CD4-positive, alpha-beta memory T cell (primary cell): ENCODE measurements at regions of chr4 and their contacts with region 1.

Region 1: DNA sequence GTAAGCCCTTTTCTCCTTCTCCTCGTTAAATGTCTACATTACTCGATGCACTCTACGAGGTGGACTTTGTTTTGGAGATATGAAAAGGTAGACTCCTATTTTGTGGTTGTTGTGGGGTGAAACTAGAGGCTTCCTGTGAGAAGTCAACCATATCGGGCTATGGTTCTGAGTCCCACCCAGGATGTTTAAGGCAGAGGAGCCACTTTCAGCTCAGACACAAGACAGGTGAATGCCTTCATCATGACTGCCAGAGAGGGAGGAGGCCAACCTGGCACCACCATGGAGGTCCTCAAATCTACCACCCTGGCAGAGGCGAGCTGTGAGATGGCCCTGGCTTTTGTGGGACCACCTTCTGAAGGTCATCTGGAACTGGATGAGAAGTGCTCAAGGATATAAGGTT is 154.4 kb upstream of the KLF3 start:
- DNase-seq: peak; percentile 67 to 77 (median 73)
- H3K4me3 ChIP-seq: peak overlapping the region; percentile 43 to 87
- H3K4me3 Mint-ChIP-seq: peak overlapping the region; percentile 77 to 91 (median 84)
- H3K27ac ChIP-seq: peak overlapping the region; percentile 63
- H3K27ac Mint-ChIP-seq: peak overlapping the region; percentile 77 to 96 (median 88)
- H3K4me1 ChIP-seq: peaks cover 89% of the 10 kb centered on the region
- H3K4me1 Mint-ChIP-seq: peaks cover 69 to 92% (median 79%) of the 10 kb centered on the region in 4 donors
- H3K27me3 ChIP-seq: no peaks in the 10 kb centered on the region
- H3K27me3 Mint-ChIP-seq: no peaks in the 10 kb centered on the region

Region 2: GRCh38 chr4:38190717-38191178 is 318.8 kb before region 1 on chr4:
- CTCF ChIA-PET with region 1: no interaction called
- POLR2A ChIA-PET with region 1: no interaction called
- intact Hi-C with region 1: no loop called
- DNase-seq: no peak
- H3K4me3 ChIP-seq: no peak overlapping the region
- H3K4me3 Mint-ChIP-seq: no peak overlapping the region
- H3K27ac ChIP-seq: no peak overlapping the region
- H3K27ac Mint-ChIP-seq: no peak overlapping the region
- H3K4me1 ChIP-seq: no peaks in the 10 kb centered on the region
- H3K4me1 Mint-ChIP-seq: no peaks in the 10 kb centered on the region
- H3K27me3 ChIP-seq: no peaks in the 10 kb centered on the region
- H3K27me3 Mint-ChIP-seq: peaks cover 1 to 3% of the 10 kb centered on the region in 2 donors

Region 3: DNA sequence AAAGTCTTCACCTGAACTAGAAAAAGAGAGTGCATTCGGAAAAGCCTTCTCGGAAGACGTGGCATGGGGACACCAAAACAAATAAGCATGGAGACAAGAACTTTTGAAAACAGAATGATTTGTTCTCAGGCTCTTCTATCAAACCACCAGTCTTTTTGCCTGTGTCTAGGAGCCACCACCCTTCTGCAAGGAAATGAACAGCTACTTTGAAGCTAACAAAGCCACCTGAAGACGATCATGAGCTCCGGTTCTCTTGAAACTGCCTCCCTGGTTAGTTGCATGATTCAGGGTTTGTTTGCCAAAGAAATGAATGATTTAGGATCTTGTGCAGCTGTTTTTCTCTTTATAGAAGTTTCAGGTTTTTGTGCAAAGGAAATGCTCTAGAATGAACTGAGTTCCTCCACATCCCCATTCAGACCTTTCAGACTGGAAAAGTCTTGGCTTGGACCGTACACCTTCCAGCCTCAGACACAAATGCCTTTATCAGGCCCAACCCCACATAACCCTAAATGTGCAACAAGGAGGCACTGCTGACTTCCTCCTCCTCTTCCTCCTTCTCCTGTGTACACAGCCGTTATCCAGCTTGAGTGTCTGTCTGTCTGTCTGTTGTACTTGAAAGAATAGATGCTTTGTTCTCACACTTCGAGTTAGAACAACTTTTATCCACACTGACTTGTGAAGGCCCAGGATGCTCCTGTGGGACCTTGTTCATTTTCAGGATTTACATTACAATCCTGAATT is 180.4 kb before region 1 on chr4:
- CTCF ChIA-PET with region 1: no interaction called
- POLR2A ChIA-PET with region 1: interaction called, 6 read pairs
- intact Hi-C with region 1: loop called (anchors 5 kb)
- DNase-seq: peak in 4 of 5 donors; percentile 32 to 44 (median 39)
- H3K4me3 ChIP-seq: no peak overlapping the region
- H3K4me3 Mint-ChIP-seq: peak overlapping the region; percentile 4 to 66 (median 32)
- H3K27ac ChIP-seq: no peak overlapping the region
- H3K27ac Mint-ChIP-seq: peak overlapping the region; percentile 28 to 90 (median 81)
- H3K4me1 ChIP-seq: peaks cover 52% of the 10 kb centered on the region
- H3K4me1 Mint-ChIP-seq: peaks cover 32 to 59% (median 47%) of the 10 kb centered on the region in 4 donors
- H3K27me3 ChIP-seq: no peaks in the 10 kb centered on the region
- H3K27me3 Mint-ChIP-seq: no peaks in the 10 kb centered on the region

Region 4: DNA sequence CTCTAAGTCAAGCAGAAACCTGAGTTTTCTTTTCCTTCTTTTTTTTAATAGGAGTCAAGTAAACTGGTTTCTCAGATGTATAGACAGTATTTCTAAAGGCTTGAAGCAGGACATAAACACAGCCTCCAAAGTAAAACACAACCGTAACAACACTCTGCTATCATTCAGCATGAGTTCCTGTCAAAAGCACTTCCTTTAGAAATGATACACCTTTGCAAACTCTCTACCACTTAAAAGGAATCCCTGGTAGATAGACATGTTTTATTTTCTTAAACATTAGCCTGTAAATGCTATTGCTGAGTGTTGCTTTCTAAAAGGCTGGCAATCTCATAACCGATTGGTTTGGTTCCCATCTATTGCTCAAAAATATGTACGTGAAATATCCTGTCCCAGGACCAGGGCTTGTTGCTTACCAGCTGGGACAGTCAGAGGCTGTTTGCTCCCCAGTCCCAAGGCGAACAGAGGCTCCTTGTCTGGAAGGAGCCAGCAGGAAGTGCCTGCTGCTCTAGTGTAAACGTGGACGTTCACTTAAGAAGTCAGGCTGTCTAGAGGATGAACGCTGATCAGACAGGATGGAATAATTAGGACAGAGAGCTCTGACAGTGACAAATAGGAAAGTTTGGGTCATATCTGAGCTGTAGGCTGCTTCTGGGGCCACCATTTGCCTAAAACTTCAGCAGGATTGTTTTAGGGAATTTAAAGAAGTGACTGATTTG is 19.5 kb before region 1 on chr4:
- CTCF ChIA-PET with region 1: interaction called, 3 read pairs
- POLR2A ChIA-PET with region 1: interaction called, 48 read pairs
- intact Hi-C with region 1: loop called (anchors 2 kb)
- DNase-seq: peak in 4 of 5 donors; percentile 22 to 40 (median 34)
- H3K4me3 ChIP-seq: peak overlapping the region in 1 of 2 donors; percentile 24
- H3K4me3 Mint-ChIP-seq: peak overlapping the region; percentile 51 to 86 (median 76)
- H3K27ac ChIP-seq: peak overlapping the region; percentile 19
- H3K27ac Mint-ChIP-seq: peak overlapping the region; percentile 86 to 94 (median 93)
- H3K4me1 ChIP-seq: peaks cover 44% of the 10 kb centered on the region
- H3K4me1 Mint-ChIP-seq: peaks cover 30 to 45% (median 34%) of the 10 kb centered on the region in 4 donors
- H3K27me3 ChIP-seq: no peaks in the 10 kb centered on the region
- H3K27me3 Mint-ChIP-seq: no peaks in the 10 kb centered on the region

Region 5: DNA sequence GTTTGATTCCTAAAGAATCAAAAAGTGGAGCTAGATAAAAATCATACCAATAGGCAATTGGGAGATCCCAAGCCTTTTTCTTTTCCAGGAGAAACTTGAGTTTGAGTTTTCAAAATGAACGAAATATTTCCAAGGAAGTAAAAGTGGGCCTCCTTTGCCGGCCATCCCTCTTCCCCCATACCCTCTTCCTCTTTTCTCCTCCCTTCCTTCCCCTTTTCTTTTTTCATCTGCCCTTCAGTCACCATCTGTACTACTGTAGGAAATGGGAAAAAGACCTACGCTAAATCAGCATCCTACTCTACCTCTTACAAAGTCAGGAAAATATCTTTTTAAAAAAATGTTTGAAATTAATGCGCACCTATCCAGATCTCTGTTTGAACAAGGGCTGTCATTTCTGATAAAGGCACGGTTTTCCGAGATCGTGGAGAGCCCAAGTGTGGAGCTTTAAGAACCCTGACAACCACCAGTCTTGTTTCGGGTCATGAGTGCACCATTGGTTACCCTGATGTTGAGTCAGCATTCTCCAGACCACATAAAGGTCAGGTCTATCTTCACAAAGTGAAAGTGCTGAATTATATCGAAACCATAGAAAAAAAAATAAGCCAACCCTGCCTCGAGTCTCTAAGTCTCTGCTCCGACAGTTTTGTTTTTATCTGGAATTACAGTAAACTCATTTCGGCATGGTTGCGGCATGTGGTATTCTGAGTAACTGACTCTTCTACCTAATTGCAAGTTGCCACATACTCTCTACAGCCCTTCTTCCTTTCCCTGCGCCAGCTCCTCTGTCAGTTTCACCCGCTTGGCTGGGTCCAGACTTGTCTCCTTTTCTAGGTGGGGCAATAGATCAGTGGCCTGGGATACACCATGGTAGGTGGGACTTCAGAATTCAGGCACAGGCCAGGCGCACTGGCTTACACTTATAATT is 14.2 kb after region 1 on chr4:
- CTCF ChIA-PET with region 1: interaction called, 8 read pairs
- POLR2A ChIA-PET with region 1: interaction called, 32 read pairs
- intact Hi-C with region 1: loop called (anchors 2 kb)
- DNase-seq: peak; percentile 52 to 73 (median 63)
- H3K4me3 ChIP-seq: peak overlapping the region; percentile 3 to 18
- H3K4me3 Mint-ChIP-seq: peak overlapping the region; percentile 80 to 92 (median 88)
- H3K27ac ChIP-seq: peak overlapping the region; percentile 6
- H3K27ac Mint-ChIP-seq: peak overlapping the region; percentile 77 to 93 (median 88)
- H3K4me1 ChIP-seq: peaks cover 30% of the 10 kb centered on the region
- H3K4me1 Mint-ChIP-seq: peaks cover 23 to 53% (median 39%) of the 10 kb centered on the region in 4 donors
- H3K27me3 ChIP-seq: no peaks in the 10 kb centered on the region
- H3K27me3 Mint-ChIP-seq: no peaks in the 10 kb centered on the region

Region 6: DNA sequence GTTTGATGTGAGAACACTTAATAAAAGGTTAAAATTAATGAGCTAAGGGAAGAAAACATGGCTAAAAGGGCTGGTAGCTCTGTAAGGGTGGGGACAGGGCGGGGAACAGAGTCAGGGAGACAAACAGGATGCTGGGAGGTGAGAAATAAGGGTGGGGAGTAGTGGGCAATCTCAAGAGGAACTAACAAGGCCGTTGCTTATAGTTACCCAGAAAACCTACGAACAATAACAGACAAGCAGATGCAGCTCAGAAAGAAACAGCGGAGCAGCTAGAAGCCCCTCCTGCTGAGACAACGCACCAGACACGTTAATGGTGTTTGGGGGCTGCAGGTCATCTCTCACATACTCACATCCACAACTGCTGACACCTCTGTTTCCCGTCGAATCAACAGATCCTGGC is 144.7 kb after region 1 on chr4:
- CTCF ChIA-PET with region 1: no interaction called
- POLR2A ChIA-PET with region 1: interaction called, 27 read pairs
- intact Hi-C with region 1: no loop called
- DNase-seq: peak; percentile 73 to 84 (median 76)
- H3K4me3 ChIP-seq: peak overlapping the region in 1 of 2 donors; percentile 4
- H3K4me3 Mint-ChIP-seq: peak overlapping the region; percentile 78 to 88 (median 81)
- H3K27ac ChIP-seq: peak overlapping the region; percentile 78
- H3K27ac Mint-ChIP-seq: peak overlapping the region; percentile 82 to 100 (median 99)
- H3K4me1 ChIP-seq: peaks cover 61% of the 10 kb centered on the region
- H3K4me1 Mint-ChIP-seq: peaks cover 39 to 69% (median 54%) of the 10 kb centered on the region in 4 donors
- H3K27me3 ChIP-seq: no peaks in the 10 kb centered on the region
- H3K27me3 Mint-ChIP-seq: no peaks in the 10 kb centered on the region

Region 7: GRCh38 chr4:39044364-39044955 is 534.9 kb after region 1 on chr4:
- CTCF ChIA-PET with region 1: no interaction called
- POLR2A ChIA-PET with region 1: no interaction called
- intact Hi-C with region 1: loop called (anchors 5 kb)
- DNase-seq: peak; percentile 91 to 100 (median 95)
- H3K4me3 ChIP-seq: peak overlapping the region; percentile 18 to 57
- H3K4me3 Mint-ChIP-seq: peak overlapping the region; percentile 87 to 98 (median 92)
- H3K27ac ChIP-seq: peak overlapping the region; percentile 82
- H3K27ac Mint-ChIP-seq: peak overlapping the region; percentile 94 to 98 (median 97)
- H3K4me1 ChIP-seq: peaks cover 46% of the 10 kb centered on the region
- H3K4me1 Mint-ChIP-seq: peaks cover 39 to 60% (median 45%) of the 10 kb centered on the region in 4 donors
- H3K27me3 ChIP-seq: no peaks in the 10 kb centered on the region
- H3K27me3 Mint-ChIP-seq: no peaks in the 10 kb centered on the region